CD8-positive, alpha-beta T cell (primary cell): ENCODE measurements at regions of chr9 and their contacts with region 1.

Region 1: DNA sequence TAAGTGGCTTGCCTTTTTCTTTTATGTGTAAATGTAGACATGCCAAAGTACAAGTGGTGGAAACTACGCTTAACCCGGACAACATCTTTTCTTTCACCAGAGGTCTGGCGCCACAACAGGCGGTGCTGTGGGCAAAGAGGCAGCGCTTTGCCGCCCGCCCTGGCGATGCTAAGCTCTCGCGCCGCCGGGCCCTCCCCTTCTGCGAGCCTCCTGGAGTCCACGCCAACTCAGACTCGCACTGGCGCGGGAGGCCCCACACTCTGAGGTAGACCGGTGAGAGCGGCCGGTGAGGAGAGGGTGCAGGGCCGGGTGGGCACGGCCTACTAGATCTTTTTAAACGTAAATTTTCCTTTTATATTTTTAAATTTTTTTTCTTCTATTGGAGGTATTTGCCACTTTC is 2253.1 kb upstream of the C9orf72 start:
- DNase-seq: no peak
- ATAC-seq: no peak
- H3K4me3 ChIP-seq: no peak overlapping the region
- H3K4me3 Mint-ChIP-seq: no peak overlapping the region
- H3K27ac ChIP-seq: no peak overlapping the region
- H3K27ac Mint-ChIP-seq: no peak overlapping the region
- H3K4me1 ChIP-seq: no peaks in the 10 kb centered on the region
- H3K4me1 Mint-ChIP-seq: no peaks in the 10 kb centered on the region
- H3K27me3 ChIP-seq: no peaks in the 10 kb centered on the region
- H3K27me3 Mint-ChIP-seq: no peaks in the 10 kb centered on the region
- CTCF ChIP-seq: no peak

Region 2: DNA sequence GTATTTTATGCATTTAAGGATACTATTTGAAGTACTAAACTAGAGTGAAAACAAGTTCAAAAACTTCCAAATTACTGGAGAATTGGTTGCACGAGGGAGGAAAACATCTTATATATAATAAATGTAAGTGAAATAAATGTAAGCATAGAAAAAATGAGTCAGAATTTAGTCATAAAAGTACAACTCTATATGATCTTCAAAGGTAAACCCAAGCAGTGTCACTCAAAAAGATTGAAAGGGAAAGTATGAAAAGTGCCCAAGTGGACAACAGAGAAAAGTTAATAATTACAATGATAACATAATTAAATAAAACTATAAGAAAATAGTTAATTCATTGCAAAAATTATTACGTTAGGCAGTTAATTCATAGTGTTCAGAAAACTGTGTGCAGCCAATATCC is 35.4 kb after region 1 on chr9:
- CTCF ChIA-PET with region 1: no interaction called
- POLR2A ChIA-PET with region 1: no interaction called
- intact Hi-C with region 1: loop called in 1 of 2 experiments (anchors 5 kb)
- DNase-seq: no peak
- ATAC-seq: no peak
- H3K4me3 ChIP-seq: no peak overlapping the region
- H3K4me3 Mint-ChIP-seq: no peak overlapping the region
- H3K27ac ChIP-seq: no peak overlapping the region
- H3K27ac Mint-ChIP-seq: no peak overlapping the region
- H3K4me1 ChIP-seq: no peaks in the 10 kb centered on the region
- H3K4me1 Mint-ChIP-seq: no peaks in the 10 kb centered on the region
- H3K27me3 ChIP-seq: no peaks in the 10 kb centered on the region
- H3K27me3 Mint-ChIP-seq: no peaks in the 10 kb centered on the region
- CTCF ChIP-seq: no peak

Region 3: GRCh38 chr9:29875547-29875946 is 49.1 kb after region 1 on chr9:
- CTCF ChIA-PET with region 1: no interaction called
- POLR2A ChIA-PET with region 1: no interaction called
- intact Hi-C with region 1: loop called in 1 of 2 experiments (anchors 5 kb)
- DNase-seq: no peak
- ATAC-seq: no peak
- H3K4me3 ChIP-seq: no peak overlapping the region
- H3K4me3 Mint-ChIP-seq: no peak overlapping the region
- H3K27ac ChIP-seq: no peak overlapping the region
- H3K27ac Mint-ChIP-seq: no peak overlapping the region
- H3K4me1 ChIP-seq: no peaks in the 10 kb centered on the region
- H3K4me1 Mint-ChIP-seq: no peaks in the 10 kb centered on the region
- H3K27me3 ChIP-seq: no peaks in the 10 kb centered on the region
- H3K27me3 Mint-ChIP-seq: no peaks in the 10 kb centered on the region
- CTCF ChIP-seq: no peak